ENCODE measurements at regions of chr1 and their contacts with region 1.

Region 1: DNA sequence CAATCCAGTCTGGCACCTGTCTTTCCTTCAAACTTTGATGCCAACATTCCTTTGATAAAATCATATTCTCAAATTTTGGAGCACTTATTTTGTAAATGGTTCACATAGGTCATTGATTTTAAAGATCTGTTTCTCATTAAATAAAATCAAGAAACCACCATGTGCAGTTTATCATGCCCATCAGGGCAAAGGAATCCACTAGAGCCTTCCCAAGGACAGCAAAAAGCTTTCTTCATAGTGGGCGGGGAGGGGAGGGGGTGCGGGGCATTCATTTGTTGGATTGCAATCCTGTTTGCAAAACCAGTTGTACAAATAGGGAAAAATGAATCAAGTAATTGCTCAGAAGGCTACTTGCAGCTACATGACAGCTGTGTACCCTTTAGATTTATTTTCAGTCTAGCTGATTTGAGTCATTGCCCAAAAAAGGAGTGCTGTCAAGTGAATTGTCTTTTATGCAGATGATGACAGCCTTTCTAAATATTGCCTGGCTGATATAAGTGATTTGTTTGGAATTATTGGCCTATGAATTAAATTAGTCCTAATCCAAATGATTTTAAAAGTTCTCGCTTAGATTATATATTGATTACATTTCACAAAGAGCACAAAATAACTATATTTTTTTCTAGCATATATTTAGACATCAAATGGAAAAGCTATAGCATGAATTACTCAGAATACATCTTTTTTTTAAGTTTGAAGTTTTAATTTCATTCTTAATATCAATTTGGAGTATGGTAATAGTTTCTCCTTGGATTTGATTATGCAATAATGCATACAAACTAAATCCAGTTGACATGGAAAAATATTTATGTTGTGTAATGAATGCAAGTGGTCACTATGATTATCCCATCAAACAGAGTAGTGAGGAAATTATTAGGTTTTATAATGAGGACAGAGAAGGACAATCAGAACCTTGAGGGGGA is 23.2 kb downstream of the LRRC8B start:
- DNase-seq: peak in 1 of 4 experiments; percentile 56
- ATAC-seq: peak; percentile 3; the same call in 1 of the 3 replicates
- H3K4me3 ChIP-seq: no peak overlapping the region
- H3K27ac ChIP-seq: peak overlapping the region; percentile 95
- H3K4me1 ChIP-seq: peaks cover 21 to 74% of the 10 kb centered on the region in 2 experiments
- H3K27me3 ChIP-seq: no peaks in the 10 kb centered on the region
- CTCF ChIP-seq: no peak
- EP300 ChIP-seq: no peak
- POLR2A ChIP-seq: no peak
- RAD21 ChIP-seq: no peak

Region 2: GRCh38 chr1:89311757-89312156 is 236.1 kb before region 1 on chr1:
- CTCF ChIA-PET with region 1: no interaction called
- POLR2A ChIA-PET with region 1: no interaction called
- in situ Hi-C with region 1: no loop called
- intact Hi-C with region 1: no loop called
- DNase-seq: no peak
- ATAC-seq: no peak
- H3K4me3 ChIP-seq: no peak overlapping the region
- H3K27ac ChIP-seq: no peak overlapping the region
- H3K4me1 ChIP-seq: no peaks in the 10 kb centered on the region
- H3K27me3 ChIP-seq: no peaks in the 10 kb centered on the region
- CTCF ChIP-seq: no peak
- EP300 ChIP-seq: no peak
- POLR2A ChIP-seq: no peak
- RAD21 ChIP-seq: no peak

Region 3: DNA sequence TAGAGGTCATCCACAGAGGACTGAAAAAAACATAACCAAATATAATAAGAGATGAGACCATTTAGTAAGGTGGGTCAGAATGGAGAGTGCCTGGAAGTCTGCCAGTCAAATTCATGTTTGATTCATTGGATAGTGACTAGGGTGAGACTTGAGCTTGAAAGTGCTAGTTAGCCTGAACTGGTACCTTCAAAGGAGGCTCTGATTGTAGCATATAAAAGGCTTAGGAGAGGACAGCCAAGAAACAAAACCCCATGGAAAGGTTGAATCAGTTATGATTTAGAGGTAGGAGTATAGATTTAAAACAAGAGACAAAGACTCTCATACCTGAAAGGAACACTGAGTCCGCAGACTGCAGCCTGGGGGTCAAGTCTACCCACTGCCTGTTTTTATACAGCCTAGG is 40.7 kb after region 1 on chr1:
- CTCF ChIA-PET with region 1: no interaction called
- POLR2A ChIA-PET with region 1: no interaction called
- in situ Hi-C with region 1: no loop called
- intact Hi-C with region 1: no loop called
- DNase-seq: no peak
- ATAC-seq: no peak
- H3K4me3 ChIP-seq: no peak overlapping the region
- H3K27ac ChIP-seq: no peak overlapping the region
- H3K4me1 ChIP-seq: no peaks in the 10 kb centered on the region
- H3K27me3 ChIP-seq: no peaks in the 10 kb centered on the region
- CTCF ChIP-seq: no peak
- EP300 ChIP-seq: no peak
- POLR2A ChIP-seq: no peak
- RAD21 ChIP-seq: no peak

Region 4: GRCh38 chr1:89598450-89599331 is 50.9 kb after region 1 on chr1:
- CTCF ChIA-PET with region 1: no interaction called
- POLR2A ChIA-PET with region 1: interaction called, 3 read pairs
- in situ Hi-C with region 1: no loop called
- intact Hi-C with region 1: loop called (anchors 2 kb)
- DNase-seq: peak; percentile 49 to 56 (median 51)
- ATAC-seq: peak; percentile 89
- H3K4me3 ChIP-seq: no peak overlapping the region
- H3K27ac ChIP-seq: no peak overlapping the region
- H3K4me1 ChIP-seq: no peaks in the 10 kb centered on the region
- H3K27me3 ChIP-seq: no peaks in the 10 kb centered on the region
- CTCF ChIP-seq: peak; percentile 60 to 76 (median 69); a peak in 5 of 6 replicates
- EP300 ChIP-seq: no peak
- POLR2A ChIP-seq: peak; percentile 22
- RAD21 ChIP-seq: peak; percentile 70 to 83

Region 5: GRCh38 chr1:89890085-89890752 is 342.4 kb after region 1 on chr1:
- CTCF ChIA-PET with region 1: no interaction called
- POLR2A ChIA-PET with region 1: no interaction called
- in situ Hi-C with region 1: no loop called
- intact Hi-C with region 1: loop called (anchors 10 kb)
- DNase-seq: peak in 2 of 4 experiments; percentile 57 to 78
- ATAC-seq: peak; percentile 55
- H3K4me3 ChIP-seq: no peak overlapping the region
- H3K27ac ChIP-seq: peak overlapping the region; percentile 74
- H3K4me1 ChIP-seq: peaks cover 16 to 89% of the 10 kb centered on the region in 2 experiments
- H3K27me3 ChIP-seq: no peaks in the 10 kb centered on the region
- CTCF ChIP-seq: no peak
- EP300 ChIP-seq: peak; percentile 30; the same call in 1 of the 2 replicates
- POLR2A ChIP-seq: no peak
- RAD21 ChIP-seq: no peak

Measured in K562 (cell line).